MCF 10A (cell line): ENCODE measurements at regions of chr2 and their contacts with region 1.

Region 1: GRCh38 chr2:123614596-123614995 is 410.5 kb upstream of the CNTNAP5 start:
- DNase-seq: no peak
- H3K4me3 Mint-ChIP-seq: no peak overlapping the region
- H3K27ac Mint-ChIP-seq: no peak overlapping the region
- H3K4me1 Mint-ChIP-seq: no peaks in the 10 kb centered on the region
- H3K27me3 Mint-ChIP-seq: no peaks in the 10 kb centered on the region
- CTCF ChIP-seq: no peak

Region 2: DNA sequence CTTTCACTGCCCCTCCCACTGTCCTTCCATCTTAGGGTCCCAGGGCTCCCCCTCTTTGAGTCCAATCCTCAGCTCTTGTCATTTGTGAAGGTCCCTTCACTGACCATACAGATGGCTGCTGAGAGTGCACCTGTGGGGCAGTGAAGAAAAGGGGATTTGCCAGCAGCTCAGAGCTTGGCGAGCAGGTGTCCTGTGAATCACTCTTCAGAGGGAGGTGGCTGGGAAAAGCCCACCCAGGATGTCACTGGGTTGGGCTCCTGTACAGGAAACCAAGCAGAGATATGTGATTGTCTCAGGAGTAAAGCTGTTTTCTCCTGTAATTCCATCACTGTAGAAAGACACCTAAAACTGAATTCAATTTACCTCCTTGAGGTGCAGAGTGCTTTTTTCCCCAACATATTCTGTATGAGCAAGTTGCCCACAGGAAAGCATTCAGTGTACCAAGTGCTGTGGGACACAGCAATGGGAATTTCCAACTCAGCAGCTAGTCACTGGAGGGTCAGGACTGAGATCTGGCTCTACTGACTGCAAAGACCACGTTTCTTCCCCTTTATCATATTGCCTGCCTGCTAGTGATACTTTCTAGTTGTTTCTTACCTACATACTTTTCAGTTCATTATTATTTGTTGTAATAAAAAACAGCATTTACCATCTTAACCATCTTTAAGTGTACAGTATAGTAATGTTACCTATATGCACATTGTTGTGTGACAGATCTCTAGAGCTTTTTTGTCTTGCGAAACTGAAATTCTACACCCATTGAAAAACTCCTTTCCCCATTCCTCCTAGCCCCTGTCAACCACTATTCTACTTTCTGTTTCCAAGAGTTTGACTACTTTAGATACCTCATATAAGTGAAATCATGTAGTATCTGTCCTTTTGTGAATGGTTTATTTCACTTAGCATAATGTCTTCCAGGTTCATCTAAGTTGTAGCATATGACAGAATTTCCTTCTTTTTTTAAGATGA is 1620.1 kb before region 1 on chr2:
- CTCF ChIA-PET with region 1: no interaction called
- POLR2A ChIA-PET with region 1: no interaction called
- intact Hi-C with region 1: loop called (anchors 5 kb)
- DNase-seq: peak; percentile 28
- H3K4me3 Mint-ChIP-seq: no peak overlapping the region
- H3K27ac Mint-ChIP-seq: no peak overlapping the region
- H3K4me1 Mint-ChIP-seq: peaks cover 15% of the 10 kb centered on the region
- H3K27me3 Mint-ChIP-seq: no peaks in the 10 kb centered on the region
- CTCF ChIP-seq: no peak